ENCODE measurements at regions of chr1 and their contacts with region 1.

Region 1: DNA sequence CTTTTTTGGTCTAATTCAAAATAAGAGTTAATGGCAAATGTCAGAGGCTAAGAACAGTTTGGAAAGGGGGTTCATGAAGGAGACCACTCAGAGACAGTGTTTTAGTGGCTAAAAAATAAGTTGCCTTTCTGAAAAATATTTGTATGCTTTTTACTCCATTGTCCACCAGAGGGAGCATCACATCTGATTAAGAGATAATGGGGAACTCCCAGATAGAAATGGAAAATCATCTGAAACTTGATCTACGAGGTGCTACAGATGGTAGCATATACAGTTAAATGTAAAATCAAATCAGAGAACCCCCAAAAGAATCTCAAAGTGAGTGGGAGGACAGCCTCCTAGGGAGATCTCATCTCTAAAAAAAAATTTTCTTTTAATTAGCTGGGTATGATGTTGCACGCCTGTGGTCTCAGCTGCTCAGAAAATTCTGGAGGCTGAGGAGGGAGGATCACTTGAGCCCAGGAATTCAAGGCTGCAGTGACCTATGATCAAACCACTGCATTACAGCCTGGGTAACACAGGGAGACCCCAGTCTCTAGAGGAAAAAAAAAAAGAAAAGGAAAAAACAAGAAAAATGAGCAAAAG is 9.7 kb downstream of the SMYD3 start:
- DNase-seq: peak in 1 of 3 donors; percentile 60
- ATAC-seq: peak; percentile 68
- H3K4me3 ChIP-seq: no peak overlapping the region
- H3K4me1 ChIP-seq: no peaks in the 10 kb centered on the region
- CTCF ChIP-seq: peak; percentile 38

Region 2: GRCh38 chr1:245156081-245156735 is 1341.2 kb before region 1 on chr1:
- intact Hi-C with region 1: loop called in 1 of 2 experiments (anchors 10 kb)
- DNase-seq: peak; percentile 85 to 91 (median 87)
- ATAC-seq: peak; percentile 97
- H3K4me3 ChIP-seq: no peak overlapping the region
- H3K4me1 ChIP-seq: peaks cover 44% of the 10 kb centered on the region
- CTCF ChIP-seq: peak; percentile 74

Region 3: GRCh38 chr1:246753670-246754535 is 256.5 kb after region 1 on chr1:
- intact Hi-C with region 1: loop called in 1 of 2 experiments (anchors 5 kb)
- DNase-seq: peak in 2 of 3 donors; percentile 61 to 78
- ATAC-seq: peak; percentile 83
- H3K4me3 ChIP-seq: no peak overlapping the region
- H3K4me1 ChIP-seq: no peaks in the 10 kb centered on the region
- CTCF ChIP-seq: peak; percentile 43

Measured in mucosa of descending colon (tissue), 3 donors.